Ovary (tissue), 10 donors: ENCODE measurements at regions of chr5 and their contacts with region 1.

Region 1: GRCh38 chr5:139517683-139518564 is 35.4 kb upstream of the STING1 start:
- DNase-seq: peak; percentile 93 to 99 (median 95)
- H3K4me3 ChIP-seq: peak overlapping the region; percentile 40
- H3K27ac ChIP-seq: peak overlapping the region; percentile 15 to 75
- H3K4me1 ChIP-seq: peaks cover 3% of the 10 kb centered on the region
- H3K27me3 ChIP-seq: no peaks in the 10 kb centered on the region
- CTCF ChIP-seq: peak; percentile 95 to 99 (median 98)
- EP300 ChIP-seq: no peak
- POLR2A ChIP-seq: peak; percentile 60

Region 2: DNA sequence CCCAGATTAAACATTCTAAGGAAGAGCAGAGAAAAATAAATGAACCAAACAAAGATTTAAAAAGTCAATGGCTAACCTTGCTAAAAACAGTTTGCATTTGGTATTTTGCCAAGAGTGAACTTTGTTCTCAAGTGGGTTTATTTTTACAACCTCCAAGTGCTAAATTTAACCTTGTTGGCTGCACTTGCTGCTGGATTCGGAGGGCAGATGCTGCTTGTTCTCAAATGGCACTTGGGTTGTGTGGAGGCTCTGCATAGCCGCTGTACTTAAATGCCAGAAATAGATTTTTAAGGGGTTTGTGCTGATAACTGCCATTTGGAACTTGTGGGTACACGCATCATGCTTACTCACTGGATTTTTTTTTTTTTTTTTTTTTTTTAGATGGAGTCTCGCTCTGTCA is 100.7 kb before region 1 on chr5:
- intact Hi-C with region 1: loop called in 3 of 4 experiments (anchors 1 to 5 kb)
- DNase-seq: peak in 2 of 5 donors; percentile 50 to 52
- H3K4me3 ChIP-seq: no peak overlapping the region
- H3K27ac ChIP-seq: no peak overlapping the region
- H3K4me1 ChIP-seq: peaks cover 5% of the 10 kb centered on the region
- H3K27me3 ChIP-seq: no peaks in the 10 kb centered on the region
- CTCF ChIP-seq: no peak
- EP300 ChIP-seq: no peak
- POLR2A ChIP-seq: no peak

Region 3: DNA sequence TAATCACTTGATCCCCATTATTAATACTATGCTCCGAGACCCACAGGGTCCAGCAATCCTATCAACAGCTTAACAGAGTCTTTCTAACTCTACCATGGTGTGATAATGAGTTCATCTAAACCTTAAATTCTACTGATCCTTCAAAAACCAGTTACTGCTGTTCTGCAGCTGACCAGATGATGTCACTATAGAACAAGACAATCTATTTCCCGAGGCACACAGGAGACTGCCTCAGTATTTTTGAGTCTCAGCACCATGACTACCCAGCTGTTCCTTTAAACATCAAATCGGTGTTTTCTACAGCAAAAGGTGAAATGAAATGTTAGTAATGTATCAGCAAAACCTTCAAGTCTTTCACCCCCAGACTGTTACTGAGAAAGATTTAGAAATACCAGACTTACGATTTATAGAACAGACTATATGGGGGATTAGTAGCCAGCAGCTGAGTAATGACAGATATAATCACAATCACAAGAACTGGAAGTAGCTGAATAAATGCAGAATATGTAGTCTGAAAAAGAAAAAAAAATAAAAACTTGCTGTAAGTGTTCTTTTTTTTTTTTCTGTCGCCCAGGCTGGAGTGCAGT is 95.5 kb before region 1 on chr5:
- intact Hi-C with region 1: loop called in 3 of 4 experiments (anchors 1 to 5 kb)
- DNase-seq: peak in 1 of 5 donors; percentile 48
- H3K4me3 ChIP-seq: no peak overlapping the region
- H3K27ac ChIP-seq: no peak overlapping the region
- H3K4me1 ChIP-seq: peaks cover 1% of the 10 kb centered on the region
- H3K27me3 ChIP-seq: no peaks in the 10 kb centered on the region
- CTCF ChIP-seq: peak; percentile 55 to 66 (median 58)
- EP300 ChIP-seq: no peak
- POLR2A ChIP-seq: no peak

Region 4: DNA sequence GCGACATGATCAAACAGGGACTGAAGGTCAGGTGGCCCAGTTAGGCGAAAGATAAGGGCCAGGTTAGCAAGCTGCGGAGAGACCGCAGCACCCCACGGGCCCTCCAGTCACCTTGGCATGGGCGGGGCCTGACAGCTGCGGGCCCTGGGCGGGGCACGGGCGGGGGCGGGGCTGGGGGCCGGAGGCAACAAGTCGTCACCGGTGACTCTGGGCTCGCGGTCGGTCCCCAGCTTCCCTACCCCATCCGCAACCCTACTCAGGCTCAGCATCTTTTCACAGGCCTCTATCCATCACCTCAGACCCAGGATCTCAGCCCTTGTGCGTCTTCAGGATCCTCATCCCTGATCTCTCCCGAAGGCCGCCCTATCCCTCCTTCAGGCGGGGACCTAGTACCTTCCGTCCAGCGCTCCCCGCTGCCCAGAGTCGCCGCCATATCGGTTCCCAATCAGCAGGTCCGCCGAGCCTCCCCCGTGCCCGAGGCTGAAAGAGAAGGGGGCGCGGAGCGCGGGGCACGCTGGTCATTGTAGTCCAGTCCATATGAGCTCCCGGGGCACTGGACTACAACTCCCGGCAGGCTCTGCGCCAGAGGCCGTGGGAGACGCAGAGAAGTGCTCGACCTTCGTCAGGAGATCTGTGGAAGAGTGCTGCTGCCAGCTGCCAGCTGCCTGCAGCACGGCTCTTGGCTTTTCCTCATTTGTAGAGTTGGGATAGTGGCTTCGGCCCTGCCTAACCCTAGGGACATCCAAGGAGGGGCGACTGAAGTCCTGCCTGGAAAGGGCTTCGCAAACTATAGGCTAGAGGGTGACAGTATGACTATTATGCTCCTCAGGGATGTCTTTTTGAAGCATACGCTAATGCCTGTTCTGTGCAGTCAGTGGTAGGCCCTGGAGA is 78.7 kb before region 1 on chr5 and contains the start of gene DNAJC18:
- intact Hi-C with region 1: loop called in 2 of 4 experiments (anchors 5 to 10 kb)
- DNase-seq: peak; percentile 93 to 96 (median 95)
- H3K4me3 ChIP-seq: peak within 1 kb of the TSS; percentile 83
- H3K27ac ChIP-seq: peak within 1 kb of the TSS; percentile 81 to 92
- H3K4me1 ChIP-seq: peaks cover 2% of the 10 kb centered on the region
- H3K27me3 ChIP-seq: no peaks in the 10 kb centered on the region
- CTCF ChIP-seq: no peak
- EP300 ChIP-seq: no peak
- POLR2A ChIP-seq: peak; percentile 47
- total RNA-seq, gene DNAJC18: 5.2 to 31.0 (median 22.4) TPM

Region 5: GRCh38 chr5:139755892-139756671 is 238.2 kb after region 1 on chr5:
- intact Hi-C with region 1: no loop called
- DNase-seq: no peak
- H3K4me3 ChIP-seq: no peak overlapping the region
- H3K27ac ChIP-seq: no peak overlapping the region
- H3K4me1 ChIP-seq: no peaks in the 10 kb centered on the region
- H3K27me3 ChIP-seq: no peaks in the 10 kb centered on the region
- CTCF ChIP-seq: no peak
- EP300 ChIP-seq: no peak
- POLR2A ChIP-seq: no peak

Region 6: DNA sequence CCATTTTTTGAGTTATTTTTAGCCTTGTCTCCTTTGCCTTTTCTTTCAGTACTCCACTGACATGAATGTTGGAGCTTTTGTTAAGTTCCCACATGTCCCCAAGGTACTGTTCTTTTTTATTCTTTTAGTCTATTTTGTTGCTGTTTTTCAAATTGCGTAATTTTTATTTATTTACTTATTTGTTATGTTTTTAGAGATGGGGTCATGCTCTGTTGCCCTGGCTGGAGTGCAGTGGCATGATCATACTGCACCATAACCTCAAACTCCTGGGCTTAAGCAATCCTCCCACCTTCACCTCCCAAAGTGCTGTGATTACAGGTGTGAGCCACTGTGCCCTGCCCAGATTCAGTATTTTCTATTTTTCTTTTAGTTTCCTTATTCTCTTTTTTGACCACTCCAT is 1262.6 kb after region 1 on chr5:
- intact Hi-C with region 1: no loop called
- DNase-seq: no peak
- H3K4me3 ChIP-seq: no peak overlapping the region
- H3K27ac ChIP-seq: no peak overlapping the region
- H3K4me1 ChIP-seq: no peaks in the 10 kb centered on the region
- H3K27me3 ChIP-seq: no peaks in the 10 kb centered on the region
- CTCF ChIP-seq: no peak
- EP300 ChIP-seq: no peak
- POLR2A ChIP-seq: no peak